CD4-positive, alpha-beta memory T cell (primary cell): ENCODE measurements at regions of chrX and their contacts with region 1.

Region 1: GRCh38 chrX:14029425-14030173 is at the start of gene GEMIN8:
- DNase-seq: peak; percentile 89 to 93 (median 92)
- H3K4me3 ChIP-seq: peak within 1 kb of the TSS; percentile 54 to 75
- H3K4me3 Mint-ChIP-seq: peak within 1 kb of the TSS; percentile 90 to 98 (median 96)
- H3K27ac ChIP-seq: peak within 1 kb of the TSS; percentile 88
- H3K27ac Mint-ChIP-seq: peak within 1 kb of the TSS; percentile 92 to 99 (median 98)
- H3K4me1 ChIP-seq: peaks cover 49% of the 10 kb centered on the region
- H3K4me1 Mint-ChIP-seq: peaks cover 22 to 50% (median 38%) of the 10 kb centered on the region in 4 donors
- H3K27me3 ChIP-seq: no peaks in the 10 kb centered on the region
- H3K27me3 Mint-ChIP-seq: no peaks in the 10 kb centered on the region
- total RNA-seq, gene GEMIN8: 10.8 to 12.3 TPM

Region 2: GRCh38 chrX:13506574-13506973 is 523.0 kb before region 1 on chrX:
- CTCF ChIA-PET with region 1: interaction called, 57 read pairs
- POLR2A ChIA-PET with region 1: interaction called, 10 read pairs
- intact Hi-C with region 1: no loop called
- DNase-seq: peak; percentile 40 to 45 (median 41)
- H3K4me3 ChIP-seq: no peak overlapping the region
- H3K4me3 Mint-ChIP-seq: no peak overlapping the region
- H3K27ac ChIP-seq: no peak overlapping the region
- H3K27ac Mint-ChIP-seq: no peak overlapping the region
- H3K4me1 ChIP-seq: no peaks in the 10 kb centered on the region
- H3K4me1 Mint-ChIP-seq: peaks cover 0 to 5% (median 0%) of the 10 kb centered on the region in 4 donors
- H3K27me3 ChIP-seq: no peaks in the 10 kb centered on the region
- H3K27me3 Mint-ChIP-seq: peaks cover 0 to 2% of the 10 kb centered on the region in 2 donors

Region 3: DNA sequence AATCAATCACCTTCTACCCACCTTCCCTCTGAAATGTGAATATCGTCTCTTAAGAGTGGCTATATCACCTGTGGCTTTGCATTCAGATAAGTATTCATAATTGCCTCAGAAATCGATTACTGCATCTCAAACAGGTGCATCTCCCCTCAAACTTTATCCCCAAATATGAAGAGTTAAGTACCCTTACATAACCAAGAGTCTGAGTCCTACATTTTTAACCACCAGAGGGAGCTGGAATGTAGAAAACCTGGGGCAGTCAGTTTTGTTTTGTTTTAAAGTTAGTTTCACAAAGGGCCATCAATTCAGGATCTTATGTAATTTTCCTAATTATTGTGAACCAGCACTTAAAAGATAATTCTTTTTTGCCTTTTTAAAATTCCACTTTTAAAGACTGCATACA is 371.0 kb before region 1 on chrX:
- CTCF ChIA-PET with region 1: interaction called, 3 read pairs
- POLR2A ChIA-PET with region 1: interaction called, 14 read pairs
- intact Hi-C with region 1: loop called (anchors 1 kb)
- DNase-seq: peak in 4 of 5 donors; percentile 59 to 69 (median 64)
- H3K4me3 ChIP-seq: no peak overlapping the region
- H3K4me3 Mint-ChIP-seq: peak overlapping the region in 3 of 8 donors; percentile 0 to 59 (median 5)
- H3K27ac ChIP-seq: no peak overlapping the region
- H3K27ac Mint-ChIP-seq: peak overlapping the region; percentile 56 to 85 (median 76)
- H3K4me1 ChIP-seq: peaks cover 27% of the 10 kb centered on the region
- H3K4me1 Mint-ChIP-seq: peaks cover 19 to 26% (median 22%) of the 10 kb centered on the region in 4 donors
- H3K27me3 ChIP-seq: no peaks in the 10 kb centered on the region
- H3K27me3 Mint-ChIP-seq: no peaks in the 10 kb centered on the region

Region 4: DNA sequence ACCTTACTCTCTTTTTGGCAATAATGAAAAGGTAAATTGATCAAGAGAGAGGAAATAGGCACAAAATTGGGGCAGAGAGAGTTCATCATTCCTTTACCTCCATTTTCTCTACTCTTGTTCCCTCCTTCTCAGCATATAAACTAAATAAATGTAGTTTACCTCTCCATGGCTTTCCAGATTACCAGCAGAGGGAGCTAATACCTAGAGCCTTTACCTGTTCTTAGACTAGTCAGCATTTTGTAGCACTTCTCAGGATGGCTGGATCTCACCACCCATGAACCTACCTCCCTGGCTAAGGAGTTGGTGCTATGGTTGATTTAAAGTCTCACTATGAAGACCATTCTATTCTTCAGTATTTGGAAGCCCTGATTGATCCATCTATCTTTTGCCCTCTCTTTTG is 279.4 kb before region 1 on chrX:
- CTCF ChIA-PET with region 1: interaction called, 17 read pairs
- POLR2A ChIA-PET with region 1: interaction called, 5 read pairs
- intact Hi-C with region 1: loop called (anchors 1 kb)
- DNase-seq: peak; percentile 37 to 53 (median 48)
- H3K4me3 ChIP-seq: no peak overlapping the region
- H3K4me3 Mint-ChIP-seq: no peak overlapping the region
- H3K27ac ChIP-seq: no peak overlapping the region
- H3K27ac Mint-ChIP-seq: peak overlapping the region; percentile 29 to 85 (median 65)
- H3K4me1 ChIP-seq: peaks cover 20% of the 10 kb centered on the region
- H3K4me1 Mint-ChIP-seq: peaks cover 16 to 28% (median 21%) of the 10 kb centered on the region in 4 donors
- H3K27me3 ChIP-seq: no peaks in the 10 kb centered on the region
- H3K27me3 Mint-ChIP-seq: no peaks in the 10 kb centered on the region

Region 5: GRCh38 chrX:15335135-15336022 is 1305.8 kb after region 1 on chrX and contains the start of gene PIGA:
- CTCF ChIA-PET with region 1: no interaction called
- POLR2A ChIA-PET with region 1: no interaction called
- intact Hi-C with region 1: loop called (anchors 5 kb)
- DNase-seq: peak; percentile 87 to 97 (median 93)
- H3K4me3 ChIP-seq: peak within 1 kb of the TSS; percentile 73 to 84
- H3K4me3 Mint-ChIP-seq: peak within 1 kb of the TSS; percentile 90 to 96 (median 91)
- H3K27ac ChIP-seq: peak within 1 kb of the TSS; percentile 89
- H3K27ac Mint-ChIP-seq: peak within 1 kb of the TSS; percentile 95 to 97 (median 96)
- H3K4me1 ChIP-seq: peaks cover 20% of the 10 kb centered on the region
- H3K4me1 Mint-ChIP-seq: peaks cover 4 to 28% (median 8%) of the 10 kb centered on the region in 4 donors
- H3K27me3 ChIP-seq: peaks cover 5% of the 10 kb centered on the region
- H3K27me3 Mint-ChIP-seq: peaks cover 4 to 6% of the 10 kb centered on the region in 2 donors
- total RNA-seq, gene PIGA: 27.8 to 32.3 TPM